SK-N-SH (cell line): ENCODE measurements at regions of chr12 and their contacts with region 1.

Region 1: DNA sequence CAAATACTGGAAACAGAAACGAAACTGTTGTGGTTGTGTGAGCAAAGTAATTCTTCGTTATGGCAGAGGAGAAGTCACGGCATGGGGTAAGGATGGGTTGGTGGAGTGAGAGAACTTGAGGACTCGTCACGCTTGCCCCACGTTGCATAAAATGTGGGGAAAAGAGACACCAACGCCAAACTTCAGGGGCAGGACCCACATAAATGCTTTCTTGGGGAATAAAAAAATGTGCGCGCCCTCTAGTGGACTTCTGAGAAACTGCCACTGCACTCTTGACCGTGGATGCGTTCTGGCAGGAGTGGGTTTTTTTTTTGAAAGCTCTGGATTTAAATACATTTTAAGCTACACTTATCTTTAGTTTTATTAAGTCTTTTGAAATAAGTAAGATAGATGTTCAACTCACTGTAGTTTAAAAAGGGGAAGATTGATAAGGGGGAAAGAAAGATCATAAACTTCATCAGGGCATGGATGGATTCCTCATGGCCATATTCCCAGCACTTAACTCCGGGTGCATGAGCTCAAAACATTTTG is 4.1 kb upstream of the IGF1 start:
- DNase-seq: peak; percentile 45
- H3K4me3 ChIP-seq: peak overlapping the region; percentile 26 to 38; a peak in 2 of 4 replicates
- H3K27ac ChIP-seq: no peak overlapping the region
- H3K4me1 ChIP-seq: peaks cover 0 to 2% of the 10 kb centered on the region in 2 experiments; a peak in 1 of 4 replicates
- H3K27me3 ChIP-seq: no peaks in the 10 kb centered on the region
- CTCF ChIP-seq: peak; percentile 95
- EP300 ChIP-seq: no peak
- RAD21 ChIP-seq: peak; percentile 77

Region 2: DNA sequence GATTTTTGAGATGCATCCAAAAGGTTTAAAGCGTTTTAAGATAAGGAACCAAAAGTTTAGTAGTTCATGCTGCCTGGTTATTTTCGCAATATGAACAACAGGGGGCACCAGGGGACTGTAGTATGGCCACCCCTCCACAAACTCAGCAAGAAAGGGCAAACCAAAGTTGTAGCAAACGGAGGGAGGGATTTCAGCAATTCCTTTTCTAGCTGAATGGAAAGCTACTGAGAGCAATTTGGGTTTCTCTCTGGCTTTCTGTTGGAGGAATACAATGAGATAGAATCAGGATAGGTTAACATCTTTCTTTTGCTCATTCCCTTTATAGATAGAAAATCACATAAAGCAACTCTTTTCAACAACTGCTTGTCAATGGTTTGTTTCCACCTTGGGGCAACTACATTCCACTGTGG is 544.6 kb before region 1 on chr12:
- CTCF ChIA-PET with region 1: interaction called, 15 read pairs
- POLR2A ChIA-PET with region 1: no interaction called
- DNase-seq: peak; percentile 57
- H3K4me3 ChIP-seq: no peak overlapping the region; a peak in 1 of 4 replicates
- H3K27ac ChIP-seq: no peak overlapping the region
- H3K4me1 ChIP-seq: peaks cover 3 to 11% of the 10 kb centered on the region in 2 experiments; a peak in 2 of 4 replicates
- H3K27me3 ChIP-seq: no peaks in the 10 kb centered on the region
- CTCF ChIP-seq: peak; percentile 93
- EP300 ChIP-seq: no peak
- RAD21 ChIP-seq: peak; percentile 94

Region 3: GRCh38 chr12:101945369-101946231 is 538.9 kb before region 1 on chr12:
- CTCF ChIA-PET with region 1: interaction called, 15 read pairs
- POLR2A ChIA-PET with region 1: no interaction called
- DNase-seq: peak; percentile 14
- H3K4me3 ChIP-seq: no peak overlapping the region
- H3K27ac ChIP-seq: no peak overlapping the region
- H3K4me1 ChIP-seq: no peaks in the 10 kb centered on the region; a peak in 1 of 4 replicates
- H3K27me3 ChIP-seq: no peaks in the 10 kb centered on the region
- CTCF ChIP-seq: no peak
- EP300 ChIP-seq: no peak
- RAD21 ChIP-seq: no peak

Region 4: DNA sequence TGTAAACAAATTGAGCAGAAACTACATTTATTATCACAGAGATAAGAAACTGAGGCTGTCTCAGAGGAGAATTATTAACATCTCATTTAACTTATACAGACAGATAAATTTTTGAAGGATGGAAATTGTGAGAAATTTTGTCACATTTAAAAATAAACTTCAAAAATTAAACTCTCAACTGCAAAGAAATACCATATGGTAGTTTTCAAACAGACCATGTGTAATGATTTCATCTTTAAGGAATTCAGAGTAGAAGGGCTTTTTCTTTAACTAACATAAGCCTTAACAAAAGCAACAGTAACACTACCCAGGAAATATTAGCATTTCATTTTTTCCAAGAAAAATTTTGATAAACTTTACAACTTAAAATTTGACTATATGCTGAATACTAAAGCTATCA is 391.2 kb before region 1 on chr12:
- CTCF ChIA-PET with region 1: interaction called, 10 read pairs
- POLR2A ChIA-PET with region 1: no interaction called
- DNase-seq: no peak
- H3K4me3 ChIP-seq: no peak overlapping the region
- H3K27ac ChIP-seq: peak overlapping the region; percentile 30 to 50; a peak in 3 of 4 replicates
- H3K4me1 ChIP-seq: peaks cover 0 to 7% of the 10 kb centered on the region in 2 experiments; a peak in 2 of 4 replicates
- H3K27me3 ChIP-seq: no peaks in the 10 kb centered on the region
- CTCF ChIP-seq: no peak
- EP300 ChIP-seq: no peak
- RAD21 ChIP-seq: no peak

Region 5: GRCh38 chr12:102470945-102471344 is 13.5 kb before region 1 on chr12:
- CTCF ChIA-PET with region 1: interaction called, 15 read pairs
- POLR2A ChIA-PET with region 1: no interaction called
- DNase-seq: no peak
- H3K4me3 ChIP-seq: no peak overlapping the region
- H3K27ac ChIP-seq: no peak overlapping the region; a peak in 1 of 4 replicates
- H3K4me1 ChIP-seq: peaks cover 0 to 5% of the 10 kb centered on the region in 2 experiments; a peak in 2 of 4 replicates
- H3K27me3 ChIP-seq: no peaks in the 10 kb centered on the region
- CTCF ChIP-seq: no peak
- EP300 ChIP-seq: no peak
- RAD21 ChIP-seq: no peak

Region 6: GRCh38 chr12:102498471-102498870 is 14.0 kb after region 1 on chr12:
- CTCF ChIA-PET with region 1: interaction called, 11 read pairs
- POLR2A ChIA-PET with region 1: no interaction called
- DNase-seq: no peak
- H3K4me3 ChIP-seq: no peak overlapping the region
- H3K27ac ChIP-seq: no peak overlapping the region
- H3K4me1 ChIP-seq: no peaks in the 10 kb centered on the region
- H3K27me3 ChIP-seq: no peaks in the 10 kb centered on the region
- CTCF ChIP-seq: no peak
- EP300 ChIP-seq: no peak
- RAD21 ChIP-seq: no peak